Activated CD4-positive, alpha-beta memory T cell treated with anti-CD3 and anti-CD28 coated beads for 36 hours (primary cell): ENCODE measurements at regions of chr3 and their contacts with region 1.

Region 1: DNA sequence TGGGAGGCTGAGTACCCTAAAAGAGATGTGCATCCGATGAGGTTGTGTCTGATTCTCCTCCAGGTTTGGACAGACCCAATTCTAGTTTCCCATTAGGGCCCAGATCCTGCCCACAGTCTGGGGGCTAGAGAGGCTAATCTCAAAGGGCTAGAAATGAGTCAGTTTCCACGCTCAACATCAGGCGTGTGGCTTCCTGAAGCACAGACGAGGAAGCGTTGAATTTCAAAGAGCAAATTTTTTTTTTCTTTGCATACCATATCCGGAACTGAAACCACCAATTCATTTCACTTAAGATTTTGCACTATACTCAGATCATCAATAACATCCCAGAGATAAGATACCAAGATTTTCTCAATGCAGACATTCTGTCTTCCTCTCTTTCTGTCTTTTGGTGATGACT is 173.8 kb upstream of the BCL6 start:
- DNase-seq: peak; percentile 75
- H3K4me3 Mint-ChIP-seq: peak overlapping the region; percentile 51
- H3K27ac Mint-ChIP-seq: peak overlapping the region; percentile 94
- H3K4me1 Mint-ChIP-seq: peaks cover 75% of the 10 kb centered on the region
- H3K27me3 Mint-ChIP-seq: peaks cover 3% of the 10 kb centered on the region

Region 2: DNA sequence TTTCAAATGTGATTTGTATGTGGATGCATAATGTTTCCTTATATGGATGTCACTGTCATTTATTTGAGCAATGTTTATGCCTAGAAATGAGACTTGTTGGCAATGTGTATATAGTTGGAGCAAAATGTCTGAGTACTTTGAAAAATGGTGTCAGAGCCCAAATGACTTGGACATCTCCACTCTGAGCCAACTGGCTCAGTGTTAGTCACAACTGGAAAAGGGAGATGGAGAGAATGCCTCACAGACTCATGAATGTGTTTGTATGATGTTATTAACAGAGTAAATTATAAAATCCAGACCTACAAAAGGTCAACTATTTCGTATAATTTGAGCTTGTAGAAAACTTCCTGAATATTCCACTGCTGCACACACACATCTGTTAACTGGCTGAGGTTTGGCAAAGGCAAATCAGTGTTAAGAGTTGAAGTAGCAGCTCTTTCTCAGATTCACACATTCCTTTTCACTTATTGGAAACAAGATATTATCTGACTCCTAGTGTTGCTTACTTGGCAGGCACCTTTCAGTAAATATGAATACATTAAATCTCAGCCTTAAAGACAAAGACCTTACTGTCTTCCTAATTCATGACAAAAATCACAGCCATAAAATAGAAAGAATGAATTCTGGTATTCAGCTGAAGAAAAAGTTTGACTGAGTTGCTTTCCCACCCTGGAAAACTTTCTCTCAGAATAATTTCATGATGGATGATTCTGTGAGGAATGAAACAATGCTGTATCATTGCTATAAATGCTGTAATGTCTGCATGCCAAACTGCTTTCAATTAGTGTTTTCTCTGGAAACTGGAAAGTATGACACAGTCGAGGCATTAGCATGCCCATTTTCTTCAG is 1049.6 kb before region 1 on chr3:
- CTCF ChIA-PET with region 1: no interaction called
- POLR2A ChIA-PET with region 1: no interaction called
- intact Hi-C with region 1: loop called (anchors 10 kb)
- DNase-seq: peak; percentile 28
- H3K4me3 Mint-ChIP-seq: no peak overlapping the region
- H3K27ac Mint-ChIP-seq: peak overlapping the region; percentile 82
- H3K4me1 Mint-ChIP-seq: peaks cover 35% of the 10 kb centered on the region
- H3K27me3 Mint-ChIP-seq: no peaks in the 10 kb centered on the region

Region 3: DNA sequence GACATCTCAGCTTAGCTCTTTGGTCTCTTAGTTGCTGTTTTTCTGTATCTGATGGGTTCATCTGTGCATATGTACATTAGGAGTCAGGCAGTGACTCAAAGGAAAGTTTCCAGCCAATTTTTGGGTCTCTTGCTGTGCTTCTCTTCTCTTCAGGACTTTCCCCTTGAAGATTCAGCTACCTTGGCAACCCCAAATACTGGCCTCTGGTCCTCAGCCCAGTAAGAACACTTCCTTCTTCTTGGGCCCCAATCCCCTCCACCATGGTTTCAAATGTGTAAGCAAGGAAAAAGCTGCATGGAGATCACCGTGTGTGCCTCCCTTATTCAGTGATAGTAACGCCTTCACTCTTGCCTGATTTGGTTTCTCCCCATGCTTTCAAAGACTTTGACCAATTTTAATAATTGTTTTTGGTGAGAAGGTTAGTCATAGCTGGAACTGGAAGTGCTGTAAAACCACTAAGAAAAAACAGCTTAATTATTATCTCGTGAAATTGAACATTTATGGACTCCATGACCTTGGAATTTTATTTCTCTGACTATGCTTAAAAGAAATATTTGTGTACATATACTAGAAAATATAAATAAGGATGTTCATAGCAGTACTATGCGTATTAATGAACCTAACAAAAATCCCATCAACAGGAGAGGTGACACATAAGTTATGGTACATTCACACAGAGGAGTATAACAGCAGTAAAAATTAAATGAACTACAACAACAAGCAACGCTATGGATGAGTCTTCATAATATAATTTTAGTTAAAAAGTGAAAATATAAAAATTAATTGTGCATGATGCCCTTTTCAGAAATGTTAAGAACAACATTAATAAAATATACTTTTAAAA is 48.5 kb before region 1 on chr3:
- CTCF ChIA-PET with region 1: interaction called, 3 read pairs
- POLR2A ChIA-PET with region 1: interaction called, 3 read pairs
- intact Hi-C with region 1: loop called (anchors 2 kb)
- DNase-seq: peak; percentile 45
- H3K4me3 Mint-ChIP-seq: no peak overlapping the region
- H3K27ac Mint-ChIP-seq: peak overlapping the region; percentile 40
- H3K4me1 Mint-ChIP-seq: peaks cover 22% of the 10 kb centered on the region
- H3K27me3 Mint-ChIP-seq: no peaks in the 10 kb centered on the region

Region 4: DNA sequence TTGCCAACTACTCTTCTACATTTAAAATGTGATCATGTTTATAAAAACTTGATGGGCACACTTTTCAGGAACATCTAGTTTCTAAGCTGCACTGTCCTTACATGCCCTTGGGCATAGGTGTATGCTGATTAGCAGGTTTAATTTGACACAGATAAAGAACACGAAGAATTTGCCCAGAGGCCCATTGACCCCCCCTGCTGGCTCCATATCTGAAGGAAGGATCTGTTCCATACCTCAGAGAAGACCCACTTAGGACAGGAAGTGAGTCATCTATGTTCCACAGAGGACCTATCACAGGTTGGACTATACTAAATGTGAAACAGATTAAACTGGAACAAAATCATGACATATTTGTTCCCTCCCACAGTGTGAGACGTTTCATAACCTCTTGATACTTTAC is 142.1 kb after region 1 on chr3:
- CTCF ChIA-PET with region 1: no interaction called
- POLR2A ChIA-PET with region 1: no interaction called
- intact Hi-C with region 1: loop called (anchors 1 kb)
- DNase-seq: peak; percentile 81
- H3K4me3 Mint-ChIP-seq: peak overlapping the region; percentile 44
- H3K27ac Mint-ChIP-seq: peak overlapping the region; percentile 80
- H3K4me1 Mint-ChIP-seq: peaks cover 35% of the 10 kb centered on the region
- H3K27me3 Mint-ChIP-seq: no peaks in the 10 kb centered on the region

Region 5: DNA sequence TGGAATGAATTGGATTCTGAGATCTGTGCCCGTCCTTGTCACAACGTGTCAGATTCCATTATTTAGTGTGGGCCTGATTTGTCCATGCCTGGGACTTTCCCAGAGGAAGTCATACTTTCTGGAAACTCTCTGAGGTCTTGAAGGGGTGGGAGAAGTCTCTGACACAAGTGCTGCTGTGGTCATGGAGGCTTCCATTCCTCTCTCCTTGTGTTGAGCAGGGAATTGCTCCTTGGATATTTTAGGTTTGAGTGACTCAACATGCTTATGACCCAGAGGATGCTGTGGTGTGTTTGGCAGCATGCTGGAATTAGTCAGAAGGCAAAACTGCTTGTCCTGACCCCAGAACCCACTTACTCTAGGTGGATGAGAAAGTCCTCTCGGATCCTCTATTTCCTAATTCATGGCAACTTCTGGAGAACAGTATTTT is 367.1 kb after region 1 on chr3:
- CTCF ChIA-PET with region 1: no interaction called
- POLR2A ChIA-PET with region 1: no interaction called
- intact Hi-C with region 1: loop called (anchors 1 kb)
- DNase-seq: peak; percentile 42
- H3K4me3 Mint-ChIP-seq: no peak overlapping the region
- H3K27ac Mint-ChIP-seq: peak overlapping the region; percentile 34
- H3K4me1 Mint-ChIP-seq: peaks cover 51% of the 10 kb centered on the region
- H3K27me3 Mint-ChIP-seq: no peaks in the 10 kb centered on the region

Region 6: GRCh38 chr3:188749010-188749617 is 830.1 kb after region 1 on chr3:
- CTCF ChIA-PET with region 1: no interaction called
- POLR2A ChIA-PET with region 1: no interaction called
- intact Hi-C with region 1: loop called (anchors 2 kb)
- DNase-seq: peak; percentile 56
- H3K4me3 Mint-ChIP-seq: no peak overlapping the region
- H3K27ac Mint-ChIP-seq: no peak overlapping the region
- H3K4me1 Mint-ChIP-seq: peaks cover 29% of the 10 kb centered on the region
- H3K27me3 Mint-ChIP-seq: no peaks in the 10 kb centered on the region